ENCODE measurements at regions of chr2 and their contacts with region 1.

Region 1: GRCh38 chr2:98086491-98087446 is at the start of gene VWA3B:
- DNase-seq: peak; percentile 59 to 69 (median 68)
- H3K4me3 ChIP-seq: peak within 1 kb of the TSS; percentile 45 to 78 (median 48)
- H3K4me3 Mint-ChIP-seq: peak within 1 kb of the TSS; percentile 72 to 93
- H3K27ac ChIP-seq: peak within 1 kb of the TSS in 1 of 2 donors; percentile 73
- H3K27ac Mint-ChIP-seq: peak within 1 kb of the TSS; percentile 75 to 95 (median 88)
- H3K4me1 ChIP-seq: peaks cover 62 to 63% of the 10 kb centered on the region in 2 donors
- H3K4me1 Mint-ChIP-seq: peaks cover 63% of the 10 kb centered on the region
- H3K27me3 ChIP-seq: peaks cover 5 to 22% of the 10 kb centered on the region in 2 donors
- H3K27me3 Mint-ChIP-seq: peaks cover 15 to 29% (median 25%) of the 10 kb centered on the region in 3 donors
- CTCF ChIP-seq: no peak
- polyA plus RNA-seq, gene VWA3B: not detected

Region 2: DNA sequence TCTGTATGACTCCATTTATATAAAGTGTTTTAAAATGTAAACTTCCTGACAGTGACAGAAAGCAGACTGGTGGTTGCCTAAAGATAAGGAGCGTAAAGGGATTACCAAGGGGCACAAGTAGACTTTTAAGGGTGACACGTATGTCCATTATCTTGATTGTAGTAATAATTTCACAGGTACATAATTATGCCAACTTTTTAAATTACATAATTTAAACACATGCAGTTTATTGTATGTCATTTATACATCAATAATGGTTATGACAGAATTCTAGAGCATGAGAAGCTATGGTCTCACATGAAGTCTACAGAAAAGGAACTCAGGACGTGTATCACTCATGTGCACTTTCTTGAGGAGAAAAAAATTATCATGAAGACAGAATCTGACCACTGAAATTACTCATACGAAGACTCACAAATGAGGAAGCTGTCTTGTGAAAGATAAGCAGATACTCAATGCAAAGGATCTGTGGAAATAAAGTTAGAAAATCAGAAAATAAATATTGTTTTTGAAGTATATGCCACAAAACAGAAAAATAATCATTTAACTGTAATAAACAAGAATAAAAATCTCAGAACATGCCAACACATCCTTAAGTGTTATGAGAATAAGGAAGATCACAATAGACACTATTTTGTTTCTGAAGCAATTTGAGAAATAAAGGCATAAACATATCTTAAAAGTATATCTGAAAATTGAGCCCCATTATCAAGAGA is 175.4 kb before region 1 on chr2:
- intact Hi-C with region 1: loop called in 1 of 2 experiments (anchors 10 kb)
- DNase-seq: peak; percentile 78 to 87 (median 85)
- H3K4me3 ChIP-seq: no peak overlapping the region
- H3K4me3 Mint-ChIP-seq: no peak overlapping the region
- H3K27ac ChIP-seq: peak overlapping the region in 1 of 2 donors; percentile 61
- H3K27ac Mint-ChIP-seq: peak overlapping the region; percentile 79 to 91 (median 86)
- H3K4me1 ChIP-seq: peaks cover 26 to 32% of the 10 kb centered on the region in 2 donors
- H3K4me1 Mint-ChIP-seq: peaks cover 49% of the 10 kb centered on the region
- H3K27me3 ChIP-seq: no peaks in the 10 kb centered on the region
- H3K27me3 Mint-ChIP-seq: no peaks in the 10 kb centered on the region
- CTCF ChIP-seq: no peak

Region 3: DNA sequence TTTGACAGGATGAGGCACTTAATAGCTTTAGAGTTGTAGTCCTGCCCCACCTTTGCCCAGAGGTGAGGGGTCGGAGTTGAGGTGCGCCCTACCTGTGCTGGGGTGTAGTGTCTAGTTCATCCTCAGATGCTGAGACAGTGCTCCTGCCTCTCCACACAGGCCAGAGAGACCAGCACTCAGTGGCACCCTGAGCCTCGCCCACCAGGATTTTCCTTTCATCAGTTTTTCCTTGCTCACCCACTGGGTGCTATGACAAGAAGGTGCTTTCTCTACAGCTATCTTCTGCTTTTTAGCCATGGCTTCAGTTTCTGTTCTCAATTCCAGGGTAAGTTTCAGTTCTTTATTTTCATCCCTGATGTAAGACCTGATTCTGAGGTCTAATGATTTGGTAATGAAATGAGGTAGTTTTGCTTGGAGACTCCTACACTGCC is 74.2 kb before region 1 on chr2:
- intact Hi-C with region 1: loop called (anchors 5 kb)
- DNase-seq: peak; percentile 86 to 95 (median 95)
- H3K4me3 ChIP-seq: peak overlapping the region in 1 of 3 experiments; percentile 33
- H3K4me3 Mint-ChIP-seq: peak overlapping the region in 1 of 2 donors; percentile 21
- H3K27ac ChIP-seq: peak overlapping the region; percentile 81 to 86
- H3K27ac Mint-ChIP-seq: peak overlapping the region; percentile 85 to 96 (median 94)
- H3K4me1 ChIP-seq: peaks cover 60 to 71% of the 10 kb centered on the region in 2 donors
- H3K4me1 Mint-ChIP-seq: peaks cover 68% of the 10 kb centered on the region
- H3K27me3 ChIP-seq: no peaks in the 10 kb centered on the region
- H3K27me3 Mint-ChIP-seq: peaks cover 2 to 16% (median 6%) of the 10 kb centered on the region in 3 donors
- CTCF ChIP-seq: no peak

Region 4: GRCh38 chr2:98036349-98037000 is 50.3 kb before region 1 on chr2:
- intact Hi-C with region 1: loop called in 1 of 2 experiments (anchors 5 kb)
- DNase-seq: no peak
- H3K4me3 ChIP-seq: no peak overlapping the region
- H3K4me3 Mint-ChIP-seq: peak overlapping the region in 1 of 2 donors; percentile 51
- H3K27ac ChIP-seq: no peak overlapping the region
- H3K27ac Mint-ChIP-seq: no peak overlapping the region
- H3K4me1 ChIP-seq: peaks cover 18% of the 10 kb centered on the region in 2 donors
- H3K4me1 Mint-ChIP-seq: peaks cover 25% of the 10 kb centered on the region
- H3K27me3 ChIP-seq: peaks cover 42 to 80% of the 10 kb centered on the region in 2 donors
- H3K27me3 Mint-ChIP-seq: peaks cover 71 to 90% (median 74%) of the 10 kb centered on the region in 3 donors
- CTCF ChIP-seq: no peak

Region 5: DNA sequence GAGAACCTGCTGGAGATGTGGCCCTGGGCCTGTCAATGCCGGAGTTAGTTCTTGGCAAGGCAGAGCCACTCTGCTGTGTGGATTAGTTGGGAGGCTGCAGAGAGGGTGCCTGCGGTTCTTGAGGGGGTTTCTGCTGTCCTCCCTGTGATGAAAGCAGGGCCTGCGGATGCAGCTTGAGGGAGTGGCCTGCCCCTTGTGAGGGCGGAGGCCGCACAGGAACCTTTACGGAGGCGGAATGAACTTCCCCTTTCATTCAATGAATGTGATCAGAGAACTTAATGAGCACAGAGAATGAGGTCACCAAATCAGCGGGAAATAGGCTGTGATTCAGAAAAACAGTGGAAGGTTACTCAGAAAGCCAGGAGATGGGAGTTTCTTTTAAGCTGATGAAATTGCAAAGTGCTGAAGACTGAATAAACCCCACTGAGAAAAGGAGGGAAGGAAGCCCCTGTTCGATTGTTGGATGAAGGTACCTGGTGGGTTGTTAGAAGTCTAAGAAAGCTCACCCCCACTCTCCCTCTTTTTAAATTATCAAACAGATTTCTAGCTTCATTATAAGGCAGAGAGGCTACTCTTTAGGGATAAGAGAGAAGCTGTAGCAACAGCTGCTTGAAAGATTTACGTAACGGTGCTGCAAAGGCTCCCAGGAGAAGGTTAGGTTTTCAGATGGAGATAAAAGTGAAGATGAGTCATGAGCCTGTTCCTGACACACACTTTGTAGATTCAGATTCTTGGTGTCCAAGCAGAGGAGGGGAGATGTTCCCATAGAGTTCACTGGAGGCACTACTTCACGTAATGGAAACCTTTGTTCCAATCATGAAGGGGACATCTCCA is 47.6 kb after region 1 on chr2:
- intact Hi-C with region 1: loop called (anchors 2 to 5 kb)
- DNase-seq: peak; percentile 86 to 97 (median 88)
- H3K4me3 ChIP-seq: no peak overlapping the region
- H3K4me3 Mint-ChIP-seq: peak overlapping the region in 1 of 2 donors; percentile 32
- H3K27ac ChIP-seq: no peak overlapping the region
- H3K27ac Mint-ChIP-seq: peak overlapping the region; percentile 65 to 93 (median 80)
- H3K4me1 ChIP-seq: peaks cover 12 to 15% of the 10 kb centered on the region in 2 donors
- H3K4me1 Mint-ChIP-seq: peaks cover 19% of the 10 kb centered on the region
- H3K27me3 ChIP-seq: peaks cover 0 to 5% of the 10 kb centered on the region in 2 donors
- H3K27me3 Mint-ChIP-seq: peaks cover 2 to 18% (median 4%) of the 10 kb centered on the region in 3 donors
- CTCF ChIP-seq: no peak